ENCODE measurements at regions of chr1 and their contacts with region 1.

Region 1: GRCh38 chr1:212035123-212035834 is at the starts of genes DTL and INTS7:
- DNase-seq: peak; percentile 99
- H3K4me3 Mint-ChIP-seq: peak within 1 kb of the TSS; percentile 92
- H3K27ac Mint-ChIP-seq: peak within 1 kb of the TSS; percentile 92
- H3K4me1 Mint-ChIP-seq: peaks cover 59% of the 10 kb centered on the region
- H3K27me3 Mint-ChIP-seq: no peaks in the 10 kb centered on the region
- CTCF ChIP-seq: peak; percentile 90
- total RNA-seq, gene DTL: 37.7 and 44.0 TPM in 2 replicates
- total RNA-seq, gene INTS7: 35.3 and 36.5 TPM in 2 replicates

Region 2: GRCh38 chr1:211735208-211736170 is 299.8 kb before region 1 on chr1:
- CTCF ChIA-PET with region 1: interaction called, 11 read pairs
- intact Hi-C with region 1: no loop called
- DNase-seq: peak; percentile 90
- H3K4me3 Mint-ChIP-seq: peak overlapping the region; percentile 41
- H3K27ac Mint-ChIP-seq: peak overlapping the region; percentile 81
- H3K4me1 Mint-ChIP-seq: peaks cover 63% of the 10 kb centered on the region
- H3K27me3 Mint-ChIP-seq: no peaks in the 10 kb centered on the region
- CTCF ChIP-seq: no peak

Region 3: GRCh38 chr1:211859405-211859804 is 175.9 kb before region 1 on chr1:
- CTCF ChIA-PET with region 1: no interaction called
- intact Hi-C with region 1: no loop called
- DNase-seq: no peak
- H3K4me3 Mint-ChIP-seq: no peak overlapping the region
- H3K27ac Mint-ChIP-seq: no peak overlapping the region
- H3K4me1 Mint-ChIP-seq: no peaks in the 10 kb centered on the region
- H3K27me3 Mint-ChIP-seq: no peaks in the 10 kb centered on the region
- CTCF ChIP-seq: no peak

Region 4: GRCh38 chr1:211944733-211945500 is 90.4 kb before region 1 on chr1:
- CTCF ChIA-PET with region 1: interaction called, 13 read pairs
- intact Hi-C with region 1: no loop called
- DNase-seq: peak; percentile 85
- H3K4me3 Mint-ChIP-seq: no peak overlapping the region
- H3K27ac Mint-ChIP-seq: peak overlapping the region; percentile 43
- H3K4me1 Mint-ChIP-seq: peaks cover 14% of the 10 kb centered on the region
- H3K27me3 Mint-ChIP-seq: no peaks in the 10 kb centered on the region
- CTCF ChIP-seq: peak; percentile 43

Region 5: GRCh38 chr1:212012034-212012740 is 23.1 kb before region 1 on chr1:
- CTCF ChIA-PET with region 1: interaction called, 12 read pairs
- intact Hi-C with region 1: loop called (anchors 1 kb)
- DNase-seq: peak; percentile 76
- H3K4me3 Mint-ChIP-seq: no peak overlapping the region
- H3K27ac Mint-ChIP-seq: no peak overlapping the region
- H3K4me1 Mint-ChIP-seq: no peaks in the 10 kb centered on the region
- H3K27me3 Mint-ChIP-seq: no peaks in the 10 kb centered on the region
- CTCF ChIP-seq: peak; percentile 94

Measured in Calu3 (cell line).